Activated B cell treated with CpG ODN at 0.5 μM for 24 hours (primary cell): ENCODE measurements at regions of chr6 and their contacts with region 1.

Region 1: DNA sequence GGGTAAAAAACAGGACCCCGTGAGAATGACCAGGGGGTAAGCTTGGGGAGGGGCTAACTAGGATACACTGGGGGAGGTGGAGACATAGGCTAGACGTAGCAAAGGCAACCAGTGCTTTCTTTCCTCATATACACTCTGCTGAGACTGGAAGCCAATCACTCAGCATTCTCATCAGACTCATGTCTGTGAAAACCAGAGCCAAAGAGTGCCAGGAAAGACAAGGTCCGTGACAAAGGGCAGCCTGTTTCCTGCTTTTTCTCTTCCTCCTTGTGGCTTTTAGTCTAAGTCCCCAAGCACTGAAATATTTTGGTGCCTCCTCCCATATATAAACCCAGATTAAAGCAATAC is 97.9 kb upstream of the NEDD9 start:
- DNase-seq: no peak
- ATAC-seq: no peak
- H3K4me3 Mint-ChIP-seq: peak overlapping the region; percentile 21
- H3K27ac Mint-ChIP-seq: peak overlapping the region; percentile 64
- H3K4me1 Mint-ChIP-seq: peaks cover 74% of the 10 kb centered on the region
- H3K27me3 Mint-ChIP-seq: no peaks in the 10 kb centered on the region
- CTCF ChIP-seq: no peak

Region 2: GRCh38 chr6:11207199-11207968 is 123.0 kb before region 1 on chr6:
- CTCF ChIA-PET with region 1: no interaction called
- POLR2A ChIA-PET with region 1: no interaction called
- intact Hi-C with region 1: no loop called
- DNase-seq: no peak
- ATAC-seq: no peak
- H3K4me3 Mint-ChIP-seq: no peak overlapping the region
- H3K27ac Mint-ChIP-seq: peak overlapping the region; percentile 36
- H3K4me1 Mint-ChIP-seq: peaks cover 18% of the 10 kb centered on the region
- H3K27me3 Mint-ChIP-seq: no peaks in the 10 kb centered on the region
- CTCF ChIP-seq: no peak

Region 3: GRCh38 chr6:11317885-11318771 is 12.3 kb before region 1 on chr6:
- CTCF ChIA-PET with region 1: no interaction called
- POLR2A ChIA-PET with region 1: no interaction called
- intact Hi-C with region 1: loop called (anchors 2 kb)
- DNase-seq: no peak
- ATAC-seq: peak; percentile 89
- H3K4me3 Mint-ChIP-seq: peak overlapping the region; percentile 12
- H3K27ac Mint-ChIP-seq: peak overlapping the region; percentile 76
- H3K4me1 Mint-ChIP-seq: peaks cover 24% of the 10 kb centered on the region
- H3K27me3 Mint-ChIP-seq: no peaks in the 10 kb centered on the region
- CTCF ChIP-seq: no peak

Region 4: DNA sequence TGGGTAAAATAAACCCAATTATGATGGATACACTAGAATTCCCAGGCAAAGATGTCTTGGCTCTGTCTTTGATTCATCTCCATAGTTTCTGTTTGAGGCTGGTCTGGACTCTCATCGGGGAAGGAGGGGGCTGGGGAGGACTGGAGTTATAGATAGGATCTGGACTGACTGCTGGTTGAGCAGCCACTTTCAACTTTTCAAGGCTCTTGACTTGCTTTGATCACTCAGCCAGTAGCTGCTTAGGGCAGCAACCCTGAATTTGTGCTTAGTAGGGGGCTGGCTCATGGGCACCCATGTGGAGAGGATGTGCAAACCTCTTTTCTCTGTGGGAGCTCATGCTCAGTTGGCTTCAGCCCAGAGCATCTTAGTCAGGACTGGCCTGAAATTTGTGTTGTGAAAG is 16.1 kb after region 1 on chr6:
- CTCF ChIA-PET with region 1: no interaction called
- POLR2A ChIA-PET with region 1: interaction called, 6 read pairs
- intact Hi-C with region 1: loop called (anchors 2 kb)
- DNase-seq: no peak
- ATAC-seq: peak; percentile 88
- H3K4me3 Mint-ChIP-seq: no peak overlapping the region
- H3K27ac Mint-ChIP-seq: peak overlapping the region; percentile 74
- H3K4me1 Mint-ChIP-seq: peaks cover 92% of the 10 kb centered on the region
- H3K27me3 Mint-ChIP-seq: no peaks in the 10 kb centered on the region
- CTCF ChIP-seq: no peak